ENCODE measurements at regions of chr12 and their contacts with region 1.

Region 1: DNA sequence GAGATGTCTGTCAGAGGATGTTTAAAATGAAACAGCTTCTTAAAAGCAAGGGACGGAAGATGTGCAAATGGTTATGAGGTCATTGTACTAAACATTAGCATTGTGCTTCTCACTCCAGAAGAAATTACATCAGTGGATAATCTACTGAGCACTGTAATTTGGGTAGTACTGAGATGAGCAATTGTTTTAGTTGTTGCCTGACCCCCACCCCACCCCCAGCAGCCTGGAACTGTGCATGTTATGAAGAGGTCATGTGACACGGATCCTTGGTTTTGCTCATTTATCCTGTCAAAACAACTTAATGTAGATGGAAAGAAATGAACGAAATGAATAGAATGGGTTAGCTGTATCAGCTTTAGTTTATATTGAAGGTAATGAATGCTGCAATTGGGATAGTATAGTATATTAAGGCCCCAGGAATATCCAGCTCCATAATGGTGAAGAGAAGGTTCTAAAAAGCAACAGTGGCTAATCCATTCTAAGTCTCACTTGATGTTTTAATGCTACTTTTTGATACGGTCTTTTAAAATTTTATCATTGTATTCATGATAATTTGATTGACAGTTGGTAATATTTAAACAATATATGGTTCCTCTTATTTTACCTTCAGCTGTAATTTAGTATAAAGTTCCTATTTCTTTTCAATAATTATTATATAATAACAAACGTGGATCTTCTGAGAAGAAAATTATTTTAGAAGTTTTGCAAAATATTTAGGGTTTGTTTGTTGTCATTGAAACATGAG is 58.5 kb downstream of the WNK1 start:
- DNase-seq: no peak

Region 2: GRCh38 chr12:614411-614970 is 196.4 kb before region 1 on chr12:
- CTCF ChIA-PET with region 1: interaction called, 10 read pairs
- POLR2A ChIA-PET with region 1: no interaction called
- DNase-seq: no peak

Region 3: DNA sequence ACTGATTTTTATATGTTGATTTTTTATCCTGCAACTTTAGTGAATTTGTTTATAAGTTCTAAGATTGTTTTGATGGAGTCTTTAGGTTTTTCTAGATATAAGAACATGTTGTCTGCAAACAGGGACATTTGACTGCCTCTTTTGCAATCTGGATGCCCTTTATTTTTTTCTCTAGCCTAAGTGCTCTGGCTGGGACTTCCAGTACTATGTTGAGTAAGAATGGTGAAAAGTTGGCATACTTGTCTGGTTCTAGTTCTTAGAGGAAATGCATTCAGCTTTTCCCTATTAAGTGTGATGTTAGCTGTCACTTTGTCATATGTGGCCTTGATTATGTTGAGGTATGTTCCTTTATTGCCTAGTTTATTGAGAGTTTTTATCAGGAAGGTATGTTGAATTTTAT is 248.3 kb after region 1 on chr12:
- CTCF ChIA-PET with region 1: no interaction called
- POLR2A ChIA-PET with region 1: no interaction called
- DNase-seq: no peak

Measured in HEK293T (cell line).